Naive thymus-derived CD8-positive, alpha-beta T cell (primary cell): ENCODE measurements at regions of chr6 and their contacts with region 1.

Region 1: GRCh38 chr6:13328076-13328874 is at the start of gene TBC1D7:
- DNase-seq: peak; percentile 88 to 96 (median 94)
- ATAC-seq: peak; percentile 86 to 88
- H3K4me3 Mint-ChIP-seq: peak within 1 kb of the TSS; percentile 90 to 97 (median 96)
- H3K27ac Mint-ChIP-seq: peak within 1 kb of the TSS; percentile 95 to 99 (median 98)
- H3K4me1 Mint-ChIP-seq: peaks cover 2 to 31% (median 19%) of the 10 kb centered on the region in 4 donors
- H3K27me3 Mint-ChIP-seq: no peaks in the 10 kb centered on the region
- polyA plus RNA-seq, gene TBC1D7: 11.8 to 17.1 (median 12.5) TPM

Region 2: DNA sequence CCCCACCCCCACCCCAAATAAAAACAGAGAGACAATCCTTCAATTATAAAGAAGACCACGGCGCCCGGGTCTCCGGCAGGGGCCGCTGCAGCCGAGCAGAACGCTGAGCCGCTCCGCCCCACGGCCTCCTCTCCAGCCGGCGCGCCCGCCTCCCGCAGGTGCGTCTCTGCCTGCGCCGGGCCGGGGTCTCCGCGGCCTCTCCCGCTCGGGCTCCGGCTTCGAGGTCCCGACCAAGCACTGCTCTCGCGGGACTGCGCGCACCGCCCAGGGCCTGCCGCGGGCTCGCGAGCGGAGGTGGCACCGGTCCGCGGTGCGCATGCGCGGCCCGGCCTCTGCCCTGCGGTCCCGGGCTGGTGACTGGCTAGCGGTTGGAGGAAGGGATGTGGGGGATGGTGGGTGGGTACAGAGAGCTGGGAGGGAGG is 245.9 kb after region 1 on chr6:
- POLR2A ChIA-PET with region 1: interaction called, 15 read pairs
- DNase-seq: peak; percentile 88 to 97 (median 93)
- ATAC-seq: peak; percentile 82 to 85
- H3K4me3 Mint-ChIP-seq: peak overlapping the region; percentile 90 to 99 (median 97)
- H3K27ac Mint-ChIP-seq: peak overlapping the region; percentile 93 to 99 (median 96)
- H3K4me1 Mint-ChIP-seq: peaks cover 15 to 30% (median 26%) of the 10 kb centered on the region in 4 donors
- H3K27me3 Mint-ChIP-seq: no peaks in the 10 kb centered on the region